ENCODE measurements at regions of chr15 and their contacts with region 1.

Region 1: DNA sequence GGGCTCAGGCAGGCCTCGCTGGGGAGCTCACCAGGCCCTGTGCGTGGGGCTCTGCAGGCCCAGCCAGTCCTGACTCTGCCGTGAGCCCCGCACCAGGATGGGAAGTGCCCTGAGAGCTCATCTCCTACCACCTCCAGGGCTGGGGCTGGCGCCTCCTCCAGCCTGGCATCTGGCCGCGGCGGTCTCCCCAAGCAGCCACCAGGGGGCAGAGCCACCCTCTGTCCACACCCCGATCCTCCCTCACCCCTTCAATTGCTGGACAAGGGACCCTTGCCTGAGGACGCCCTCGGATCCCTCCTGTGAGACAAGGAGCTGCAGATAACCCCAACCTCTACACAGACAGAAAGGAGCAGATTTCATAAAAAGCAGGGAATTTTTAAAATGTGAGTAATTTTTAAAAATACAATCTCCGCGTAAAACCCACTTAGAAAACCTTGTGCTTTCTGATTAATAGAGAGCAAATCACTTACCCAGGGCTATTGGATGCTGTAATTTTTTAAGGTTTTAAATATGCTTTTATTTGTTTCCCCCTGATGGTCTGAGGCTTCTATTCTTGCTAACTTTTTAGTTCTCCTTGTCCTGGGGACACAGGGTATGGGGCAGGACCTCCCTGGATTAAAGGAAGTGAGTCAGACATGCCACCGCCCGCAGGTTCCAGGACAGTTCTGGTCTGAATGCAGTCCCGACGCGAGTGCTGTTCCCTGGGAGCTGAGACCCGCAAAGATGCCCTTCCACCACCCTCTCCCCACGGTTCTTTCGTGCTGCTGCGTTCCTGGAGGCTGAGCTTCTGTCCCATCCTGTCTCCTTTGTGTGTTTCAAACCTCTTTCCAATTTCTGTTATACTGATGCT is 52.3 kb upstream of the CHRNA7 start:
- DNase-seq: peak; percentile 78
- ATAC-seq: peak; percentile 76
- H3K4me3 Mint-ChIP-seq: no peak overlapping the region
- H3K27ac Mint-ChIP-seq: no peak overlapping the region
- H3K4me1 Mint-ChIP-seq: peaks cover 9% of the 10 kb centered on the region
- H3K27me3 Mint-ChIP-seq: peaks cover 26% of the 10 kb centered on the region

Region 2: GRCh38 chr15:31660816-31661215 is 317.2 kb before region 1 on chr15:
- CTCF ChIA-PET with region 1: interaction called, 3 read pairs
- POLR2A ChIA-PET with region 1: no interaction called
- intact Hi-C with region 1: loop called in 1 of 2 experiments (anchors 10 kb)
- DNase-seq: no peak
- ATAC-seq: no peak
- H3K4me3 Mint-ChIP-seq: no peak overlapping the region
- H3K27ac Mint-ChIP-seq: no peak overlapping the region
- H3K4me1 Mint-ChIP-seq: no peaks in the 10 kb centered on the region
- H3K27me3 Mint-ChIP-seq: peaks cover 4% of the 10 kb centered on the region

Region 3: GRCh38 chr15:31857194-31857593 is 120.8 kb before region 1 on chr15:
- CTCF ChIA-PET with region 1: no interaction called
- POLR2A ChIA-PET with region 1: no interaction called
- intact Hi-C with region 1: no loop called
- DNase-seq: no peak
- ATAC-seq: no peak
- H3K4me3 Mint-ChIP-seq: no peak overlapping the region
- H3K27ac Mint-ChIP-seq: no peak overlapping the region
- H3K4me1 Mint-ChIP-seq: no peaks in the 10 kb centered on the region
- H3K27me3 Mint-ChIP-seq: peaks cover 9% of the 10 kb centered on the region

Region 4: GRCh38 chr15:31870328-31871165 is 107.5 kb before region 1 on chr15:
- CTCF ChIA-PET with region 1: interaction called, 4 read pairs
- POLR2A ChIA-PET with region 1: no interaction called
- intact Hi-C with region 1: loop called in 1 of 2 experiments (anchors 2 kb)
- DNase-seq: peak; percentile 90
- ATAC-seq: peak; percentile 88
- H3K4me3 Mint-ChIP-seq: peak within 1 kb of the TSS; percentile 87
- H3K27ac Mint-ChIP-seq: peak within 1 kb of the TSS; percentile 79
- H3K4me1 Mint-ChIP-seq: peaks cover 10% of the 10 kb centered on the region
- H3K27me3 Mint-ChIP-seq: peaks cover 9% of the 10 kb centered on the region

Region 5: DNA sequence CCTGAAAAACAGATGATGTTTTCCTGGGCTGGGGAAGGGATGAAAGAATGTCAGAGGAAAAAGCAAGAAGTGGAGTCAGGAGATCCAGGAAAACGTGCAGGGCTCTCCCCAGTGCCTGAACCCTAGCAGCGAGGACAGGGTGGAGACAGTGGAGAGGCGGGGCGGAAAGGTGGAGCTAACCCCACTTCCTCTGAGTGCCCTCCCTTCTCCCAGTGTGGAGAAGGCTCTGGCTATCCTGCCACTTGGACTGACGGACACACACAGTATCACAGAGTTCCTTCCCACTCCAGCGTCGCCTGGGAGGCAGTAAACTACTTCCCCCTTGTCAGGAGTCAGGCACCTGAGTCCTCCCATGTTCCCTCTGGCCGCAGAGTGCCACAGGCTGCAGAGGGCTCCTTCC is 73.0 kb before region 1 on chr15:
- CTCF ChIA-PET with region 1: no interaction called
- POLR2A ChIA-PET with region 1: no interaction called
- intact Hi-C with region 1: loop called in 1 of 2 experiments (anchors 10 kb)
- DNase-seq: no peak
- ATAC-seq: no peak
- H3K4me3 Mint-ChIP-seq: no peak overlapping the region
- H3K27ac Mint-ChIP-seq: no peak overlapping the region
- H3K4me1 Mint-ChIP-seq: no peaks in the 10 kb centered on the region
- H3K27me3 Mint-ChIP-seq: peaks cover 8% of the 10 kb centered on the region

Region 6: DNA sequence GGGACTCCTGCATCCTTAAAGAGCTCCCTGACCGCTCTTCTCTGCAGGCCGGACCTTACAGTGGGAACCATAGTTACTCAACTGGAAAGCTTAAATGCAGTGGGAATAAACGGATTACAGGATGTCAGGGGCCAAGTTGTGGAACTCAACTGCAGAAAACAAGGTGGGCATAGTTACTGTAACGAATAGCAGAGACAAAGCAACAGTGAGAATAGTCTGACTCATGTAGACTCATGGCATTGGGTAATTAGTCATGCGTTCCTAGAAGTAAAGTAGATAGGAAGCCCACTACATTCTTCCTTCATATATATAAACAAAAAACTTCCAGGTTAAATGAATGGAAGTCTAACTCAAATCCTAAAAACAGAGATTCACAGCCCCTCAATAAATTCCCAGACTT is 43.2 kb before region 1 on chr15:
- CTCF ChIA-PET with region 1: no interaction called
- POLR2A ChIA-PET with region 1: no interaction called
- intact Hi-C with region 1: no loop called
- DNase-seq: no peak
- ATAC-seq: no peak
- H3K4me3 Mint-ChIP-seq: no peak overlapping the region
- H3K27ac Mint-ChIP-seq: no peak overlapping the region
- H3K4me1 Mint-ChIP-seq: peaks cover 12% of the 10 kb centered on the region
- H3K27me3 Mint-ChIP-seq: peaks cover 37% of the 10 kb centered on the region

Region 7: GRCh38 chr15:32152574-32152973 is 174.5 kb after region 1 on chr15:
- CTCF ChIA-PET with region 1: no interaction called
- POLR2A ChIA-PET with region 1: no interaction called
- intact Hi-C with region 1: no loop called
- DNase-seq: no peak
- ATAC-seq: no peak
- H3K4me3 Mint-ChIP-seq: no peak overlapping the region
- H3K27ac Mint-ChIP-seq: no peak overlapping the region
- H3K4me1 Mint-ChIP-seq: no peaks in the 10 kb centered on the region
- H3K27me3 Mint-ChIP-seq: peaks cover 6% of the 10 kb centered on the region

Measured in activated CD4-positive, alpha-beta T cell treated with anti-CD3 and anti-CD28 coated beads for 36 hours (primary cell).